ENCODE measurements at regions of chr2 and their contacts with region 1.

Region 1: GRCh38 chr2:119753041-119753929 is 6.4 kb upstream of the PTPN4 start:
- DNase-seq: no peak
- H3K4me3 ChIP-seq: no peak overlapping the region
- H3K27ac ChIP-seq: no peak overlapping the region
- H3K4me1 ChIP-seq: peaks cover 0 to 9% (median 2%) of the 10 kb centered on the region in 6 donors
- H3K27me3 ChIP-seq: no peaks in the 10 kb centered on the region
- CTCF ChIP-seq: peak in 10 of 11 experiments; percentile 39 to 82 (median 68)
- POLR2A ChIP-seq: no peak

Region 2: DNA sequence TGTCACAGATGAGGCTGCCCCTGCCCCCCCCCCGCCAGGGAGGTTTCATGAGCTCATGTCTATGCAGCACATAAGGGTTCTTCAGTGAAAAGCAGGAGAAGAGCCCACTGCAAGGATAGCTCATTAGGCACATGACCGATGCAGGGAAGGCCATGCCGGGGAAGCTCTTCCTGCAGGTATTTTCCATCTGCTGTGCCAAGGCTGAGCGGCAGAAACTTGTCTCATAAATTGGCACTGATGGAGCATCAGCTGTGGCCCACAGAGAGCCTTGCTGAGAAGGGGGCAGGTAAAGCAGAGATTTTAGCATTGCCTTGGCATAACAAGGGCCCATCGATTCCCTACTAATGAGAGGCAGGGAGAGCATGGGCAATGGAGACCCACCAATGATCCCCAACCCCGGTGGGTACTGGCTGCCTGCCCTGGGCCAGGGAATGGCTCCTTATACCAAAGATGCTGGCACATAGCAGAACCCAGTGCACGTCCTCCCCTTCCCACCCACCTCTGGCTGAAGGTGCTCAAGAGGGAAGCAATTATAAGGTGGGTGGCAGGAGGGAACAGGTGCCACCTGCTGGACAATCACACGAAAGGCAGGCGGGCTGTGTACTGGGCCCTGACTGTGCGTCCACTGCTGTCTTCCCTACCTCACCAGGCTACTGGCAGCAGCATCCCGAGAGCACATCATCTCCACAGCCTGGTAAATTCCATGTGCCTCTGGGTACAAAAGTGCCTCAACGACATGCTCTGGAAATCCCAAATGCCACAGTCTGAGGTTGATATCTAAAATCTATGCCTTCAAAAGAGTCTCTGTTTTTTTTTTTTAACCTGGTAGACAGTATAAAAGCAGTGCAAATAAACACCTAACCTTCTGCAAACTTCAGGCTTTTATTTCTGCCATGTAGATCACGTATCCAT is 488.2 kb before region 1 on chr2:
- intact Hi-C with region 1: no loop called
- DNase-seq: no peak
- H3K4me3 ChIP-seq: no peak overlapping the region
- H3K27ac ChIP-seq: no peak overlapping the region
- H3K4me1 ChIP-seq: peaks cover 0 to 5% (median 0%) of the 10 kb centered on the region in 6 donors
- H3K27me3 ChIP-seq: no peaks in the 10 kb centered on the region
- CTCF ChIP-seq: peak; percentile 31 to 79 (median 63)
- POLR2A ChIP-seq: no peak

Region 3: GRCh38 chr2:119826370-119826961 is 73.2 kb after region 1 on chr2:
- intact Hi-C with region 1: loop called (anchors 5 kb)
- DNase-seq: no peak
- H3K4me3 ChIP-seq: no peak overlapping the region
- H3K27ac ChIP-seq: no peak overlapping the region
- H3K4me1 ChIP-seq: peaks cover 0 to 20% (median 0%) of the 10 kb centered on the region in 6 donors
- H3K27me3 ChIP-seq: no peaks in the 10 kb centered on the region
- CTCF ChIP-seq: peak in 10 of 11 experiments; percentile 13 to 66 (median 45)
- POLR2A ChIP-seq: no peak

Region 4: GRCh38 chr2:120174963-120175581 is 421.8 kb after region 1 on chr2:
- intact Hi-C with region 1: loop called (anchors 5 kb)
- DNase-seq: no peak
- H3K4me3 ChIP-seq: no peak overlapping the region
- H3K27ac ChIP-seq: no peak overlapping the region
- H3K4me1 ChIP-seq: peaks cover 13 to 55% (median 27%) of the 10 kb centered on the region in 6 donors
- H3K27me3 ChIP-seq: no peaks in the 10 kb centered on the region
- CTCF ChIP-seq: peak; percentile 44 to 84 (median 67)
- POLR2A ChIP-seq: no peak